ENCODE measurements at regions of chr9 and their contacts with region 1.

Region 1: DNA sequence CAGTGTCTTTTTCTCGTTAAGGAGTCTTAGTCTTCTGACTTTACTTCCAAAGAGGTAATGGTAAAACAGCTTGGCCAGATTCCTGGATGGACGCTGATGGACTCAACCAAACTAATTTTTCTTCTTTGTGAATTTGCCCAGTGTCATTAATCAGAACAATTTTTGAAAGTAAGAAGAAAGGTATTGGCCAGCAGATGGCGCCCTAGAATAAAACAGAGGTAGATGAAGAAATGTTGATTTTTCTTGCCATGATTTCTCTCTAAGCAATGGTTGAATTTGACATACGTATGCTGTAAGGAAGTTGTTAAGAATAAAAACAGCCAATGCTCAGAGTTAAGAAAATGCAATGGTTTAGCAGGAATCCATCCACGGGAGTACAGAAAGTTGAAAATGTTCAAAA is 500.0 kb downstream of the DIRAS2 start:
- DNase-seq: peak in 29 of 42 donors; percentile 9 to 83 (median 46)

Region 2: GRCh38 chr9:90773617-90774016 is 631.0 kb after region 1 on chr9:
- intact Hi-C with region 1: loop called (anchors 10 kb)
- DNase-seq: peak in 12 of 42 donors; percentile 9 to 60 (median 34)

Region 3: DNA sequence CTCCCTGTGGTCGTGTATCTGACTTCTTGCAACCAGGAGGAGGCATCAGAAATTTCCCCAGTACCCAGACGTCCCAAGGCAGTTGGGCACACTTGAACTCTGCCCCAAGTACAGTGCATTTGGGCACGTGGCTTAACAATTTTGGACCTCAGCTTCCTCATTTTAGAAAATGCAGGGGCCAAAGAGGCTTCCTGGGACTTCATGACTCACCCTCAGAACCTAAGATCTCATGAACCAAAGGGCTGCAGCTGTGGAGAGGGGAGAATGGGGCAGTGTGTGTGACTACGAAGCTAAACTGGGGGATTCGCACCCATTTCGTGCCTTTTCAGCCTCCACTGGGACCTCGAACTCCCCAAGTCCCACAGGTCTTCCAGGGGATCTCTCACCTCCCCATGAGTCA is 718.2 kb after region 1 on chr9:
- intact Hi-C with region 1: loop called (anchors 10 kb)
- DNase-seq: no peak